ENCODE measurements at regions of chr1 and their contacts with region 1.

Region 1: DNA sequence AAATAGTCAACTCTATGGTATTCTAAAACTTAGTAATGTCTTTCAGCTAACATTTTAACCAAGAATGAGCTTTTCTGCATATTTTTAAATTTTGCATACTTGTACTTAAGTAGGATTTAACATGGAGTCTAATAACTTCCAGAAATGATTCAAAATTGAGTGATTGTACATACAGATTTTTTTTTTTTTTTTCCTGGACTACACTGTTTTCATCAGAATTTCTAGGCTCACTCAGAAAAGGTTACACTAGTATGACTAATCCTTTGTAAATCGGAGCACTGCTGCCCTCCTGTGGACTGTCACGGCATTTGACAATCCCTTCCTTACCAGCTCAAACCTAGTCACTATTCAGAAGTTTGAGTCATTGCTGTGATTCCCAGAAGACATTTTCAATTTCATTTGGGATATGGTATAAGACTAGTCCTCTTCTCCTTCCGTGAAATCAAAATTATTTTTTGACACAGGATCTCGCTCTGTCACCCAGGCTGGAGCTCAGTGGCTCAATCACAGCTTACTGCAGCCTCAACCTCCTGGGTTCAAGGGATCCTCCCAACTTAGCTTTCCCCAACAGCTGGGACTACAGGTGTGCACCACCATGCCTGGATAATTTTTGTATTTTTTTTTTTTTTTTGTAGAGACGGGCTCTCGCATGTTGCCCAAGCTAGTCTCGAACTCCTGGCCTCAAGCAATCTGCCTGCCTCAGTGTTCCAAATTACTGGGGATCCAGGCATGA is 45.5 kb downstream of the CD46 start:
- DNase-seq: peak; percentile 53 to 78 (median 58)
- H3K4me3 ChIP-seq: no peak overlapping the region
- H3K4me3 Mint-ChIP-seq: no peak overlapping the region
- H3K27ac ChIP-seq: no peak overlapping the region
- H3K27ac Mint-ChIP-seq: peak overlapping the region in 3 of 7 donors; percentile 23 to 54 (median 26)
- H3K4me1 ChIP-seq: peaks cover 32% of the 10 kb centered on the region
- H3K4me1 Mint-ChIP-seq: peaks cover 38 to 52% (median 40%) of the 10 kb centered on the region in 4 donors
- H3K27me3 ChIP-seq: no peaks in the 10 kb centered on the region
- H3K27me3 Mint-ChIP-seq: no peaks in the 10 kb centered on the region

Region 2: GRCh38 chr1:206890690-206891089 is 906.7 kb before region 1 on chr1:
- CTCF ChIA-PET with region 1: no interaction called
- POLR2A ChIA-PET with region 1: no interaction called
- intact Hi-C with region 1: no loop called
- DNase-seq: peak in 3 of 5 donors; percentile 20 to 32 (median 30)
- H3K4me3 ChIP-seq: no peak overlapping the region
- H3K4me3 Mint-ChIP-seq: peak overlapping the region in 6 of 8 donors; percentile 22 to 77 (median 69)
- H3K27ac ChIP-seq: no peak overlapping the region
- H3K27ac Mint-ChIP-seq: peak overlapping the region in 6 of 7 donors; percentile 11 to 85 (median 52)
- H3K4me1 ChIP-seq: peaks cover 16% of the 10 kb centered on the region
- H3K4me1 Mint-ChIP-seq: peaks cover 13 to 35% (median 22%) of the 10 kb centered on the region in 4 donors
- H3K27me3 ChIP-seq: no peaks in the 10 kb centered on the region
- H3K27me3 Mint-ChIP-seq: peaks cover 3 to 6% of the 10 kb centered on the region in 2 donors

Region 3: GRCh38 chr1:207619871-207620542 is 177.4 kb before region 1 on chr1:
- CTCF ChIA-PET with region 1: interaction called, 10 read pairs
- POLR2A ChIA-PET with region 1: interaction called, 3 read pairs
- intact Hi-C with region 1: no loop called
- DNase-seq: peak; percentile 16 to 43 (median 36)
- H3K4me3 ChIP-seq: no peak overlapping the region
- H3K4me3 Mint-ChIP-seq: no peak overlapping the region
- H3K27ac ChIP-seq: no peak overlapping the region
- H3K27ac Mint-ChIP-seq: no peak overlapping the region
- H3K4me1 ChIP-seq: peaks cover 3% of the 10 kb centered on the region
- H3K4me1 Mint-ChIP-seq: peaks cover 0 to 4% (median under 1%) of the 10 kb centered on the region in 4 donors
- H3K27me3 ChIP-seq: no peaks in the 10 kb centered on the region
- H3K27me3 Mint-ChIP-seq: peaks cover 4% of the 10 kb centered on the region in 2 donors

Region 4: GRCh38 chr1:207711285-207711684 is 86.1 kb before region 1 on chr1:
- CTCF ChIA-PET with region 1: interaction called, 23 read pairs
- POLR2A ChIA-PET with region 1: interaction called, 9 read pairs
- intact Hi-C with region 1: loop called (anchors 1 kb)
- DNase-seq: no peak
- H3K4me3 ChIP-seq: no peak overlapping the region
- H3K4me3 Mint-ChIP-seq: no peak overlapping the region
- H3K27ac ChIP-seq: no peak overlapping the region
- H3K27ac Mint-ChIP-seq: peak overlapping the region in 1 of 7 donors; percentile 29
- H3K4me1 ChIP-seq: no peaks in the 10 kb centered on the region
- H3K4me1 Mint-ChIP-seq: peaks cover 0 to 3% (median 1%) of the 10 kb centered on the region in 4 donors
- H3K27me3 ChIP-seq: no peaks in the 10 kb centered on the region
- H3K27me3 Mint-ChIP-seq: peaks cover 0 to 4% of the 10 kb centered on the region in 2 donors

Region 5: DNA sequence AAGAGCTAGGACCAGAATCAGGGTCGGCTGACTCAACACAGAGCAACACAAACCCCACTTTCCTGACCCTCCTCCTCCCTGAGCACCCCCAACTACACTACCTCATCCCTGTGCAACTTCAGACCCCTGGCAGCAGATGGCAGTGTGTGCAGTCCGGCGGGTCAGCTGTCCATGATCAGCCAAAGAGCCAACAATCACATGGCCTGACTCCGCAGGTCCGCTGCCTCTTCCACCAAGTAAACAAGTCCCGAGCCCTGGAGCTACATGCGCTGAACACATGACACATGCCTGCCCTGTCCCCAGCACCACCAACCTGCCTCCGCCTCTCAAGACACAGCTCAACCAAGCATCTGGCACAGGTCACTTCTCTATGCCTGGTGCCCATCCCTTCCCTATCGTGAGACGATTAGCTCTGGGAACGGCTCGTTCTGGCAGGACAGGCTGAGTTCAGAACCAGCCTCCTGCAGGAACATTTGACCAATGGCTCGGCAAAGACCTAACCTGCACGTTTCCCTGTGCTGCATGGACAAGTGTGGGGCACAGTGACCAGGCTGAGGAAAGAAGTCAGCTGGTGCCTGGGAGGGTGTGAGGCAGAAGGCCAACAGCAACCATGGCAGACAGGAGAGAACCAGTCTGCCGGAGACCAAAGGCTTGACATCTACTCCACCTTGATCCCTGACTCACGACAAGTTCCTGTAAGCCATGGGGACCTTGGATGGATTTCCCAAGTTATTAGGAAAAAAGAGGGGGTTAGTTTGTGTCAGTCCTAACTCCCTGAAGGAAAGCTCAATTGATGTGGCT is 14.7 kb after region 1 on chr1:
- CTCF ChIA-PET with region 1: interaction called, 25 read pairs
- POLR2A ChIA-PET with region 1: interaction called, 5 read pairs
- intact Hi-C with region 1: no loop called
- DNase-seq: no peak
- H3K4me3 ChIP-seq: no peak overlapping the region
- H3K4me3 Mint-ChIP-seq: peak overlapping the region in 1 of 8 donors; percentile 17
- H3K27ac ChIP-seq: no peak overlapping the region
- H3K27ac Mint-ChIP-seq: peak overlapping the region in 6 of 7 donors; percentile 13 to 85 (median 61)
- H3K4me1 ChIP-seq: peaks cover 75% of the 10 kb centered on the region
- H3K4me1 Mint-ChIP-seq: peaks cover 51 to 90% (median 74%) of the 10 kb centered on the region in 4 donors
- H3K27me3 ChIP-seq: no peaks in the 10 kb centered on the region
- H3K27me3 Mint-ChIP-seq: no peaks in the 10 kb centered on the region

Region 6: GRCh38 chr1:207863893-207864535 is 66.6 kb after region 1 on chr1:
- CTCF ChIA-PET with region 1: interaction called, 30 read pairs
- POLR2A ChIA-PET with region 1: interaction called, 11 read pairs
- intact Hi-C with region 1: loop called (anchors 1 kb)
- DNase-seq: peak; percentile 43 to 75 (median 49)
- H3K4me3 ChIP-seq: no peak overlapping the region
- H3K4me3 Mint-ChIP-seq: peak overlapping the region; percentile 45 to 89 (median 72)
- H3K27ac ChIP-seq: peak overlapping the region; percentile 48
- H3K27ac Mint-ChIP-seq: peak overlapping the region; percentile 73 to 95 (median 86)
- H3K4me1 ChIP-seq: peaks cover 88% of the 10 kb centered on the region
- H3K4me1 Mint-ChIP-seq: peaks cover 55 to 74% (median 60%) of the 10 kb centered on the region in 4 donors
- H3K27me3 ChIP-seq: no peaks in the 10 kb centered on the region
- H3K27me3 Mint-ChIP-seq: no peaks in the 10 kb centered on the region

Region 7: GRCh38 chr1:207885129-207886032 is 88.0 kb after region 1 on chr1:
- CTCF ChIA-PET with region 1: interaction called, 18 read pairs
- POLR2A ChIA-PET with region 1: interaction called, 5 read pairs
- intact Hi-C with region 1: no loop called
- DNase-seq: peak; percentile 67 to 72 (median 69)
- H3K4me3 ChIP-seq: no peak overlapping the region
- H3K4me3 Mint-ChIP-seq: peak overlapping the region in 4 of 8 donors; percentile 13 to 58 (median 26)
- H3K27ac ChIP-seq: no peak overlapping the region
- H3K27ac Mint-ChIP-seq: peak overlapping the region in 6 of 7 donors; percentile 71 to 98 (median 78)
- H3K4me1 ChIP-seq: peaks cover 32% of the 10 kb centered on the region
- H3K4me1 Mint-ChIP-seq: peaks cover 25 to 39% (median 34%) of the 10 kb centered on the region in 4 donors
- H3K27me3 ChIP-seq: no peaks in the 10 kb centered on the region
- H3K27me3 Mint-ChIP-seq: peaks cover 1 to 14% of the 10 kb centered on the region in 2 donors

Region 8: DNA sequence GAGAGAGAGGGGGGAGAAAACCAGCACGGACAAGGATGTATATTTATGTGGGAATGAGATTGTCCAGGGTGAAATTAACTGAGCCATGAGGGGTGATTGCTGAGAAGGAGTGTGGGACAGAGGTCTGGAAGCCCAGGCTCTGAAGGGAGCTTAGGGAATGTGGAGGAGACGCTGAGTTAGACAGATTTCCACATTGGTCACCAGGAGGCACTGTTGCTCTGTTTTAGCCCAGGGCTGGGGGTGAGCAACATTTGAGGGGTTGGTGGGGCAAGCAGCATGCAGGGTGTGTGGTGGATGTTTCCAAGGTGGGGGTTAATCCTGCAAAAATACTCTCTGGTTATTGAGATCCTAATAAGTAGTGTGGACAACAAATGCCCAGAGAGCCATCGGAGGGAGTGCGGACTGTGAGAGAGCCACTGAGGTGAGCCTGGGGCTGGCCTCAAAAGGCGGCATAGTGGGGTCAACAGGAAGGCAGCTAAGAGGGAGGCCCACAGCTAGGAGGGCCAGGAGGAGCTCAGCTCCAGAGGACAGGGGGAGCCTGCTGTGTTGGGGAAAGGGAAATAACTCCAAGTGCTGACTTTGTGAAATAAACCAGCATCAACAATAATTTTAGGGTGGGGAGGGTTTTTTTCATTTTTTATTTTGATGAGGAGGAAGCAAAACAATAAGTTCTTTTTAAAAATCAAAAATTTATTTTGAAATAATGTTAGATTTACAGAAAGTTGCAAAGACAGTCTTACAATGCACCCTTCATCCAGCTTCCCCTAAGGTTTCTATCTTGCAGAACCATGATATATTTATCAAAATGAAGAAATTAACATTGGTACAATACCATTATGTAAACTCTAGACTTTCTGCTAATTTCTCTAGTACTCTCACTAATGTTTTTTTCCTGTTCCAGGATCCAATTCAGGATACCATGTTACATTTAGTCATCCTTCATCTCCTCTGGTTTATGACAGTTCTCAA is 196.4 kb after region 1 on chr1:
- CTCF ChIA-PET with region 1: no interaction called
- POLR2A ChIA-PET with region 1: no interaction called
- intact Hi-C with region 1: no loop called
- DNase-seq: no peak
- H3K4me3 ChIP-seq: no peak overlapping the region
- H3K4me3 Mint-ChIP-seq: no peak overlapping the region
- H3K27ac ChIP-seq: no peak overlapping the region
- H3K27ac Mint-ChIP-seq: peak overlapping the region in 1 of 7 donors; percentile 2
- H3K4me1 ChIP-seq: no peaks in the 10 kb centered on the region
- H3K4me1 Mint-ChIP-seq: no peaks in the 10 kb centered on the region
- H3K27me3 ChIP-seq: no peaks in the 10 kb centered on the region
- H3K27me3 Mint-ChIP-seq: peaks cover 9 to 16% of the 10 kb centered on the region in 2 donors